ENCODE measurements at regions of chr2 and their contacts with region 1.

Region 1: DNA sequence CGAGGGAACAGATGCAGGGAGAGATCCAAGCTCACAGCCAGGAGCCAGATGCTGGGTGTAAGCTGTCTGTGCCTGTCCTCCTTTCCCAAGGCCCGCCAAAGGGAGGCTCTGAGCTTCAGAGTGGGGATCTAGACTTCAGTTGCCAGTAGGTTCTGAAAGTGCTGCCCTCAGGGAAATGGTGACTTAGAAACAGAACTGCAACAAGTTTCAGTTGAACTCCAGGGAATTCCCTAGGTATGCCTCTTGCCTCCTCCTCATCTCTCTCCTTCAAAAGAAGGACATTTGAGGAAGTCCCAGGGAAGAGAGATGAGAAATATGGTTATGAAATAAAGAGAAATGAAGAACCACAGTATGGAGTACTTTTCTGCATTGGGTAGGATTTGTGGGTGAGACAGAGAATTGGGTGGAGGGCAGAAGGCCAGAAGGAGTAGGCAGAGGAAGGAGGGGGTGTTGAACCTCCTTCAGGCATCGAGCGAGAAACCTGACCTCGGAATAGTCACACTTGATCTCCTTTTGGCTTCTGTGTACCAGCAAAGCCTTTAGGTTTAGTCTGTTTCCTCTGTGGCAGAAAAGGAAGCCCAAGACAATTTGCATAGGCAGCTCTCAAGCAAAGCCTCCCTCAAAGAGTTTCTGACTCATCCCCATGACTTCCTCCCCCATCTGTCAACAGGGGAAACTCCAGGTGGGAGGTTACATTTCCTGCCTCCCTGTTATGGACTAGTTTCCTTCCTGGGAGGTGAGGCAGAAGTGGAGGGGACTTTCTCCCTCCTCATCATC is 45.7 kb downstream of the QPCT start:
- DNase-seq: no peak
- ATAC-seq: peak; percentile 62 to 76
- H3K4me3 ChIP-seq: no peak overlapping the region
- H3K27ac ChIP-seq: peak overlapping the region; percentile 8 to 46 (median 38)
- H3K4me1 ChIP-seq: peaks cover 7 to 9% of the 10 kb centered on the region in 2 donors
- H3K27me3 ChIP-seq: no peaks in the 10 kb centered on the region
- CTCF ChIP-seq: no peak
- POLR2A ChIP-seq: no peak

Region 2: DNA sequence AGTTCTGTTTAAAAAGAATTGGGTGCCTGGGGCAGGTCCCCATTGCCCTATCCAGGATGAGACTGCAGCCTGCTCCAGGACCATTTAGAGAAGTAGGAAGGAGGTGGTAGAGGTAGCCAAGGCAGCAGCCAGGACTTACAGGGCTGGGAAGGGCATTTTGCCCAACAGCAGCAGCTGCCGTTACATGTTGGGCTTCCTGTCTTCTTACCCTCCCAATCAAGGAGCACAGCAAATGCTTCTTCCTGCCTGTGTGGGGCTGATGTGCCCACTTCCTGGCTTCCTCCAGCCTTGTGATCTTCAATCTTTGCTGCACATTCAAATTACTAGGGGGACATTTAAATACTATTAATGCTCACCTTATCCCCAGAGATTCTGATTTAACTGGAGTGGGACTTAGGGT is 66.3 kb after region 1 on chr2:
- in situ Hi-C with region 1: no loop called
- intact Hi-C with region 1: no loop called
- DNase-seq: no peak
- ATAC-seq: no peak
- H3K4me3 ChIP-seq: no peak overlapping the region
- H3K27ac ChIP-seq: no peak overlapping the region
- H3K4me1 ChIP-seq: no peaks in the 10 kb centered on the region
- H3K27me3 ChIP-seq: no peaks in the 10 kb centered on the region
- CTCF ChIP-seq: no peak
- POLR2A ChIP-seq: no peak

Region 3: DNA sequence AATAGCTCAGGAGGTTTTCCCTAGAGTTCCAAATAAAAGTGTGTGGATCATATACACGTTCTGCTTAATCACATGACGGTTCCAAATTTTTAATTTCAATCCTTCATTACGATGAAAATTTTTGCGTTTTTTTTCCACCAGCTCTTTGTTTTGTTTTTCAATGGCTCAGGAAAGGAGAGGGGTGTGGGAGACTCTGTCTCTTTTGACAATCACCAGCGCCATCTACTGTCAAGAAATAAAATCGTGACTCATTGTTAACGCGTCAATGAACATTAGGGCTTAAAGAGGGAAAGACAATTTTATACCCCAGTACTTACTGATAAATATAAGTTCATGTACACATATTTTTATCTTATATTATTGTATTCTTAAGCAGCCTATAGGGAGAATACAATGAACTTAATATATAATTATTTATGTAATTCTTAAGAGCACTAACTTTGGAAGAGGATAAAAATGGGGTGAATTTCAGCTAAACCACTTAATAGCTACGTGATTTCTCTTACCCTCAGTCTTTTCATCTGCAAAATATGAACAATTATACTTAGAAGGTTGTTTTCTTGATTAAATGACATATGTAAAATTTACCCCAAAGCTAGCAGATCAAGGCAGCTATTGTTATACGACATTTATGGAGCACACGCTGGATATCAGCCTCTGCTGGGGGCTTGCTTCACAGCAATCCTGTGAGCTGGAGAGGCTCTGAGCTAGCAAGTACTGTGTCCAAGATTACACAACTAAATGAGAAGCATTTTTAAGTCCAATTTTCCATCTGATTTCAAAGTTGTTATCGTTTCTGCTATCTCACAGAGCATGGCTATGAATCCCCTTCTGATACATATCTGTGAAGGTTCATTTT is 487.5 kb after region 1 on chr2:
- in situ Hi-C with region 1: loop called in 2 of 4 experiments (anchors 5 to 10 kb)
- intact Hi-C with region 1: no loop called
- DNase-seq: no peak
- ATAC-seq: peak; percentile 77 to 95
- H3K4me3 ChIP-seq: no peak overlapping the region
- H3K27ac ChIP-seq: no peak overlapping the region
- H3K4me1 ChIP-seq: peaks cover 0 to 6% of the 10 kb centered on the region in 2 donors
- H3K27me3 ChIP-seq: no peaks in the 10 kb centered on the region
- CTCF ChIP-seq: peak; percentile 67 to 83 (median 71)
- POLR2A ChIP-seq: no peak